ENCODE measurements at regions of chr5 and their contacts with region 1.

Region 1: GRCh38 chr5:181260387-181261319 is at the start of gene TRIM52:
- DNase-seq: peak; percentile 85 to 86
- H3K4me3 ChIP-seq: peak within 1 kb of the TSS; percentile 66 to 88 (median 69)
- H3K27ac ChIP-seq: peak within 1 kb of the TSS; percentile 89 to 98 (median 98)
- H3K4me1 ChIP-seq: peaks cover 33 to 48% of the 10 kb centered on the region in 2 donors
- H3K27me3 ChIP-seq: no peaks in the 10 kb centered on the region
- CTCF ChIP-seq: peak in 1 of 6 experiments; percentile 24
- POLR2A ChIP-seq: peak; percentile 37 to 86
- total RNA-seq, gene TRIM52: 14.8 to 30.8 (median 23.8) TPM

Region 2: DNA sequence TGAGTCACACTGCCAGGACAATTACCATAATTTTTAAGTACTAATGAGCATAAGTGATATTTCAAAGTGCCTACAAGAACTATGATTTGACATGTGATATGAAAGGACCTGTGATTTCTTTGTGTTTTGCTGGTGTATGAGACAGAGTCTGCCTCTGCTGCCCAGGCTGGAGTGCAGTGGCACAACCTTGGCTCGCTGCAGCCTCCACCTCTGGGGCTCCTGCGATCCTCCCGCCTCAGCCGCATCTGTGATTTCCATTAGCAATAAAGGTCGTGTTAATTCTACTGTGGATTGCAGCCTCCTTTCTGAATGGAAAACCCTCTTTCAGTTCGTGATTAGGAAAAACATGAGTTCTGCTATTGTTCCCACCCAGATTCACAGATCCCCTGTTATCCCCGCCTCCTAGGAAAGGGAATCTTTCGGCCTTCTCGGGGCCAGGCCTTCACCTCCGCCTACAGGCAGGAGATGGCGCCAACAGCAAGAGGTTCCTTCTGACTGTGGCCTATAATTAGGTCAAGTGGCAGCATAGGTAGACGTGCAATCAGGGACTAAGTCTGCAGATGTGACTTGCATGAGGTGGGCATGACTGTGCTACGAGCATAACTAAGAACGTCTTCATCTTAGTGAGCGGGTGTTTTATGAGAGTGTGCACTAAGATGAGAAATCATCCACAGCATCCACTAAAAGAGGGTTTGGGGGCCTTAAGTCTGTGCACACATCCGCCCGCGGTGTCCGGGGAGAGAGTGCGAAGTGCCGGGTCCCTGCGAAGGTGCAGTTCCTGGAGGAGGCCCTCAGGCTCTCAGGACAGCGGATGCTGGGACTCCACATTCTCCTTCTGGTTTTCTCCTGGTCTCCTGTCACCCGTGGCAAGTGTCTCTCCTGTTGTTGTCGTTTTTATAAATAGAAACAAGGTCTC is 78.7 kb before region 1 on chr5:
- intact Hi-C with region 1: loop called (anchors 5 kb)
- DNase-seq: peak; percentile 79 to 83
- H3K4me3 ChIP-seq: no peak overlapping the region
- H3K27ac ChIP-seq: no peak overlapping the region
- H3K4me1 ChIP-seq: peaks cover 0 to 10% of the 10 kb centered on the region in 2 donors
- H3K27me3 ChIP-seq: no peaks in the 10 kb centered on the region
- CTCF ChIP-seq: peak; percentile 37 to 92 (median 82)
- POLR2A ChIP-seq: no peak